Activated T-helper 1 cell treated with anti-CD3 and anti-CD28 coated beads, Interleukin-12 subunit alpha, Interleukin-12 subunit beta, Interleukin-2, Interleukin-4 antibody, amounts not matched to agents 30 ng/mL and 10 ng/mL and 1 ng/mL, durations not matched to agents 14 hours and 24 hours and 36 hours (primary cell): ENCODE measurements at regions of chrX and their contacts with region 1.

Region 1: GRCh38 chrX:386768-387575 is at the start of gene PPP2R3B:
- DNase-seq: peak; percentile 98
- H3K4me3 Mint-ChIP-seq: peak within 1 kb of the TSS; percentile 89
- H3K27ac Mint-ChIP-seq: peak within 1 kb of the TSS; percentile 99
- H3K4me1 Mint-ChIP-seq: peaks cover 9% of the 10 kb centered on the region
- H3K27me3 Mint-ChIP-seq: peaks cover 5% of the 10 kb centered on the region
- total RNA-seq, gene PPP2R3B: 43.2 and 44.1 TPM in 2 replicates

Region 2: DNA sequence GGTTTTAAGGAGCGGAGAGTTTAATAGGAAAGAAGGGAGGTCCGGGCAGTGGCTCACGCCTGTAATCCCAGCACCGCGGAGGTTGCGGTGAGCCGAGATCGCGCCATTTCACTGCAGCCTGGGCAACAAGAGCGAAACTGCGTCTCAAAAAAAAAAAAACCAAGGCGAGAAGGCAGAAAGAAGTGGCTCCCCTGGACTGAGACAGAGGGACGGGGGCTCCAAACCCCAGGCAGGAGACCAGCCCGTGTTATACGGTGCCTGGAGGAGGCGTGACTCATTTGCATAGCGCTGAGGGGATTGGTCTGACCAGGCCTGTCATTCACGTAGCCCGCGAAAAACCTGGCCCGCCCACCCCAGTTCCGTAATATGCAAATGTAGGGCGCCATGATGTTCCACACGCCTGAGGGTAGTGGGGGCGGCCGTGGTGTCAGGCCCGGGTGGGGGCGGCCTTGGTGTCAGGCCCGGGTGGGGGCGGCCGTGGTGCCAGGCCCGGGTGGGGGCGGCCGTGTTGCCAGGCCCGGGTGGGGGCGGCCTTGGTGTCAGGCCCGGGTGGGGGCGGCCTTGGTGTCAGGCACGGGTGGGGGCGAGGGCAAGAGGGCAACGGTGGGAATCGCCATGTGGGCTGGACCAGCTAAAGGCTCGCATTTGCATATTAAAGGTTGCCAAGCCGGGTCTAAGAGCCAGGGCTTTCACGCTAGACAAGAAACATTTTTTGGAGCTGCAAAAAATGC is 103.7 kb before region 1 on chrX:
- intact Hi-C with region 1: loop called (anchors 1 kb)
- DNase-seq: peak; percentile 87
- H3K4me3 Mint-ChIP-seq: peak overlapping the region; percentile 96
- H3K27ac Mint-ChIP-seq: peak overlapping the region; percentile 96
- H3K4me1 Mint-ChIP-seq: peaks cover 5% of the 10 kb centered on the region
- H3K27me3 Mint-ChIP-seq: peaks cover 6% of the 10 kb centered on the region

Region 3: GRCh38 chrX:318739-319578 is 68.0 kb before region 1 on chrX and contains the start of gene GTPBP6:
- intact Hi-C with region 1: loop called (anchors 1 kb)
- DNase-seq: peak; percentile 100
- H3K4me3 Mint-ChIP-seq: peak within 1 kb of the TSS; percentile 86
- H3K27ac Mint-ChIP-seq: peak within 1 kb of the TSS; percentile 94
- H3K4me1 Mint-ChIP-seq: peaks cover 18% of the 10 kb centered on the region
- H3K27me3 Mint-ChIP-seq: peaks cover 2% of the 10 kb centered on the region
- total RNA-seq, gene GTPBP6: 68.3 and 69.5 TPM in 2 replicates

Region 4: DNA sequence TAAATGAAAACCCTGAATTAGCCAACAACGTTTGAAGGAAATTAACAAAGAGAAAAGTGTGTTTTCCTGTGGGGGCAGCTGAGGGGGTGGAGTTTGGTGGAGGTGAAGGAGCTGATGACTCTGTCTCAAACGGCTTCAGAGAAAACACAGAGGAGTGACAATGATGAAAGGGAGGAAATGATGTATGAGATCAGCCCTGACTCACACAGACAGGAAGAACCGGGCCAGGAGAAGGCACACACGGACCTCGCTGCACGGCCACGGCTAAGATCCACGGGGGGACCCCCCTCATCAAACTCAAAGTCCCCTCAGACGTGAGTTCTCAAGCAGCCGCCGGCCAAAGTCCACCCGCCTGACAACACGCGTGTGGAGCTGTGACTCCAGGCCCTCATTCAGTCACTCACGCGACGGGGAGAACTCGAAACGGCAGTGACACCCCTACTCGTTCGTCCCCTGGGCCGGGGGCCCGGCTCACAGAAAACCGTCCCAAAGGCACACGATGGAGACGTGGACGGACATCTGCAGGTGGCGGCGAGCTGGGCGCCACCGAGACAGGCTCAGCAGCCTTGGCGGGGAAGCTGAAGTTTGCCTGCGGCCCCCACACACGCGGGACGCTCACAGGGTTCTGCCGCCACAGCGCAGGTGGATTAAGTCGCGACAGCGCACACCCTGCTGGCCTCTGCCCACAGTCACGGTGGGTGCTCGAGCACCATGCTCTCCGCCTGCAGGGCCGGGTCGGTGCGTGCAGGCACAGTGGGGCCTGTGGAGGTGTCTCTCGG is 29.1 kb before region 1 on chrX:
- intact Hi-C with region 1: loop called (anchors 1 kb)
- DNase-seq: peak; percentile 32
- H3K4me3 Mint-ChIP-seq: peak overlapping the region; percentile 56
- H3K27ac Mint-ChIP-seq: peak overlapping the region; percentile 88
- H3K4me1 Mint-ChIP-seq: peaks cover 13% of the 10 kb centered on the region
- H3K27me3 Mint-ChIP-seq: no peaks in the 10 kb centered on the region

Region 5: DNA sequence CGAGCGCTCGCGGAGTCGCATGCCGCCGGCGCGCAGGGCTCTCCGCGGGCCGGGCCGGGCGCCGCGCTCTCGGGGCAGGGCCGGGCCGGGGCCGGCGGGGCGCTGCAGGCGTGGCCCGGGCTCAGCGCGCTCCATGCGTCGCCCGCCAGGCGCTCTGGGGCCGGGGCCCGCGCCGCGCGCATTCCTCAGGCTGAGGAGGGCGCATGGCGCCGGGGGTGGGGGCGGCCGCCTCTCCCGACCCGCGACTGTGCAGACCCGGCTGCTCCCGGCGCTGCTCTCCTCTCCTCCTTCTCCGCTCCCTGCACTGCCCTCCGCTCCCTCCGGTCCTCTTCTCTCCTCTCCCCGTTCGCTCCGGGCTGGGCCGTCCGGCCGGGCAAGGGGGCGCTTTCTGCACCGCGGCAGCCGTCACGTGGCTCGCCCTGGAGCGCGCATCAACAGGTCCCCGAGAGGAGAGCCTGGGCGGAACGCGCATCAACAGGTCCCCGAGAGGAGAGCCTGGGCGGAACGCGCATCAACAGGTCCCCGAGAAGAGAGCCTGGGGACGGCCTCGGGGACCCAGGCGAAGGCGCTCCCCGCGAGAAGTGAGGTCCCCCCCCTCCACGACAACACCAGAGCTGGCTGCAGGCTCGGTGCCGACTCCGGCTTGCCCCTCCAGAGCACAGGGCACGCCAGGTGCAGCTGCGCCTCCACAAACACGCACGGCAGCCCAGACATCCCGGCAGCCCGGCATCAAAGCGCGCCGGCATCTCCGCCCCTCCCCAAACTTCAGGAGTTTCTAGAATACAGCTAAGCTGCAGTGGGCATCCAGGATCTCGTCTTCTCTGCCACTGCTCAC is 13.1 kb before region 1 on chrX:
- intact Hi-C with region 1: loop called (anchors 1 kb)
- DNase-seq: peak; percentile 29
- H3K4me3 Mint-ChIP-seq: peak overlapping the region; percentile 79
- H3K27ac Mint-ChIP-seq: no peak overlapping the region
- H3K4me1 Mint-ChIP-seq: peaks cover 24% of the 10 kb centered on the region
- H3K27me3 Mint-ChIP-seq: peaks cover 33% of the 10 kb centered on the region